Astrocyte of the cerebellum (primary cell): ENCODE measurements at regions of chr1 and their contacts with region 1.

Region 1: GRCh38 chr1:94541175-94542087 is at the start of gene F3:
- DNase-seq: peak; percentile 52
- H3K4me3 ChIP-seq: peak within 1 kb of the TSS; percentile 80
- CTCF ChIP-seq: no peak

Region 2: GRCh38 chr1:94599095-94599813 is 57.8 kb after region 1 on chr1:
- in situ Hi-C with region 1: loop called (anchors 5 kb)
- DNase-seq: no peak
- H3K4me3 ChIP-seq: no peak overlapping the region
- CTCF ChIP-seq: peak; percentile 63

Region 3: GRCh38 chr1:94648225-94649007 is 107.0 kb after region 1 on chr1:
- in situ Hi-C with region 1: loop called (anchors 5 kb)
- DNase-seq: peak; percentile 92
- H3K4me3 ChIP-seq: no peak overlapping the region
- CTCF ChIP-seq: no peak

Region 4: GRCh38 chr1:94792473-94793295 is 251.3 kb after region 1 on chr1:
- in situ Hi-C with region 1: loop called (anchors 25 kb)
- DNase-seq: peak; percentile 64
- H3K4me3 ChIP-seq: no peak overlapping the region
- CTCF ChIP-seq: peak; percentile 49